ENCODE measurements at regions of chr9 and their contacts with region 1.

Region 1: GRCh38 chr9:124708633-124709291 is 62.3 kb downstream of the NR6A1 start:
- DNase-seq: no peak
- H3K4me3 ChIP-seq: no peak overlapping the region
- H3K27ac ChIP-seq: no peak overlapping the region
- H3K27me3 ChIP-seq: no peaks in the 10 kb centered on the region
- CTCF ChIP-seq: no peak

Region 2: GRCh38 chr9:124617471-124618141 is 91.2 kb before region 1 on chr9:
- intact Hi-C with region 1: loop called (anchors 1 to 2 kb)
- DNase-seq: peak; percentile 66 to 89 (median 85)
- H3K4me3 ChIP-seq: no peak overlapping the region
- H3K27ac ChIP-seq: no peak overlapping the region
- H3K27me3 ChIP-seq: no peaks in the 10 kb centered on the region
- CTCF ChIP-seq: peak; percentile 54 to 98 (median 94)